Activated T-helper 2 cell treated with anti-CD3 and anti-CD28 coated beads, Interferon-gamma antibody, Interleukin-2, Interleukin-4, amounts not matched to agents 10 μg/mL and 5 μg/mL and 100 μg/mL, durations not matched to agents 14 hours and 24 hours and 36 hours (primary cell): ENCODE measurements at regions of chr13 and their contacts with region 1.

Region 1: GRCh38 chr13:25114220-25114619 is 18.3 kb downstream of the PABPC3 start:
- DNase-seq: peak; percentile 56
- H3K4me3 Mint-ChIP-seq: no peak overlapping the region
- H3K27ac Mint-ChIP-seq: no peak overlapping the region
- H3K4me1 Mint-ChIP-seq: peaks cover 2% of the 10 kb centered on the region
- H3K27me3 Mint-ChIP-seq: peaks cover 5% of the 10 kb centered on the region

Region 2: DNA sequence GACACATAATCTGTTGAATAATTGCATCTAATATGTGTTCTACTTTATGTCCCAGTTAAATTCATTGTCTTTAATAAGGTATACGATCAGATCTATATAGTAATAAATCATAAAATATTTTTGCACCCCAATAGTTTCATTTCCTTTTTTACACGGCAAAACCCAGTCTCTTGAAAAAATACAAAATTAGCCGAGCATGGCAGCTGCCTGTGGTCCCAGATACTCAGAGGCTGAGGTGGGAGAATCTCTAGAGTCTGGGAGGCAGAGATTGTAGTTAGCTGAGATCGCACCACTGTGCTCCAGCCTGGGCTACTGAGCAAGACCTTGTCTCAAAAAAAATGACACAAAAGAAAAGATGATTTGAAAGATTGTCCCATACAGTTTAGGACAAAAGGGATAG is 549.3 kb before region 1 on chr13:
- intact Hi-C with region 1: no loop called
- DNase-seq: no peak
- H3K4me3 Mint-ChIP-seq: no peak overlapping the region
- H3K27ac Mint-ChIP-seq: no peak overlapping the region
- H3K4me1 Mint-ChIP-seq: peaks cover 3% of the 10 kb centered on the region
- H3K27me3 Mint-ChIP-seq: peaks cover 35% of the 10 kb centered on the region

Region 3: DNA sequence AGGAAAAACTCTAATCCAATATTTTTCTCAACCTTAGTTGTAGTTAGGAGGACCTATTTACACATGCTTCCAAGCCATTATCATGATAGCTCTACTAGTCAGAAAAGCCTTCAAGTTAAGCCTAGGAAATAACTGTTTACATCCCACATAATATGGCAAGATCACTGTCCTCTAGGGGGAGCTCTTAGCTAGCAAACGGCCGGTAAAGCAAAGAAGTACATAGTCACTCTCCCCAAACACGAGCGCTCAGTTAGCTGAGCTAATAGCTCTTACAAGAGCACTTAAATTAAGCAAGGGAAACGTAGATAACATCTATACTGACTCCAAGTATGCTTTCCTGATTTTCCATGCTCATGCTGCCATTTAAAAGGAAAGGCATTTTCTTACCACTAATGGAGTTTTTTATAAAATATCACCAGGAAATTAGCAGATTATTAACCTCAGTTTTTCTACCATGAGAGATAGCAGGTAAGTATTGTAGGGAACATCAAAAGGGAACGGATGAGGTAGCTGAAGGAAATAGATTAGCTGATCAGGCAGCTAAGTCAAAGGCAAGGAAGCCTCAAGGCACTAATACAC is 118.9 kb before region 1 on chr13:
- intact Hi-C with region 1: loop called (anchors 5 kb)
- DNase-seq: peak; percentile 49
- H3K4me3 Mint-ChIP-seq: no peak overlapping the region
- H3K27ac Mint-ChIP-seq: no peak overlapping the region
- H3K4me1 Mint-ChIP-seq: peaks cover 5% of the 10 kb centered on the region
- H3K27me3 Mint-ChIP-seq: peaks cover 31% of the 10 kb centered on the region

Region 4: GRCh38 chr13:25085125-25085742 is 29.0 kb before region 1 on chr13:
- intact Hi-C with region 1: loop called (anchors 2 kb)
- DNase-seq: no peak
- H3K4me3 Mint-ChIP-seq: no peak overlapping the region
- H3K27ac Mint-ChIP-seq: no peak overlapping the region
- H3K4me1 Mint-ChIP-seq: peaks cover 1% of the 10 kb centered on the region
- H3K27me3 Mint-ChIP-seq: peaks cover 12% of the 10 kb centered on the region

Region 5: DNA sequence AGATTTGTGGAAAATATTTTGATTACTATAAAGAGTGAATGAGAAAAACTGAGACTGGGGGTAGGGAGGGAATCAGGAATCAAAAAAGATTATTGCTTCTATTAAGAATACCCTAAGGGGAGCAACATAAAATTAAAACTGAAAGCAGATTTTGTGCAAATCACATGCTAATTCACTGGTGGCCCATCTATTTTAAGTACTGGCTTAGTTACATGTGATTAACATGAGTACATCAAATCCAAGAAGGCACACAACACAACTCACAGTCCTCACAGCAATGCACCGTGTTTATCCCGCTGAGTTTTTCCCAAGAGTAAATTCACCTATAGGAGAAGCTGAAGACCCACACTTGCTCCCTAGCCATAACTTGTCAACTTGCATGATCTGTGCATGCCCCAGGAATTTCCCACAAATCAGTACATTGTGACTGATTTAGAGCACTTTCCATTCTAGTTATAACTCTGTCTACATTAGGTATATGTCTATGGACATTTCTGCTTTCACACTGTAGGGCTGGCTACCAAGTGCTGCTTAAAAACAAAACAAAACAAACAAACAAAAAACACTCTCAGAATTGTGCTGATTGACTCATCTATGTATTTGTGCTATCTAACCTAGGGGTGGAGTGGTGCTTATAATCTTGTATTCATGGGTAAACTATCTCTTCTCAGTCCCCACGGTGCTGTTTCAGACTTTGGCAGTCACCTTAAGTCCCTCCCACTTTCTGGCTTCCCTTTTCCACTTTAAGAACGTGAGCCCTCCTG is 33.6 kb after region 1 on chr13:
- intact Hi-C with region 1: no loop called
- DNase-seq: no peak
- H3K4me3 Mint-ChIP-seq: no peak overlapping the region
- H3K27ac Mint-ChIP-seq: no peak overlapping the region
- H3K4me1 Mint-ChIP-seq: no peaks in the 10 kb centered on the region
- H3K27me3 Mint-ChIP-seq: peaks cover 8% of the 10 kb centered on the region